Activated T-helper 2 cell treated with anti-CD3 and anti-CD28 coated beads, Interferon-gamma antibody, Interleukin-2, Interleukin-4, amounts not matched to agents 10 μg/mL and 5 μg/mL and 100 μg/mL, durations not matched to agents 14 hours and 24 hours and 36 hours (primary cell): ENCODE measurements at regions of chr11 and their contacts with region 1.

Region 1: DNA sequence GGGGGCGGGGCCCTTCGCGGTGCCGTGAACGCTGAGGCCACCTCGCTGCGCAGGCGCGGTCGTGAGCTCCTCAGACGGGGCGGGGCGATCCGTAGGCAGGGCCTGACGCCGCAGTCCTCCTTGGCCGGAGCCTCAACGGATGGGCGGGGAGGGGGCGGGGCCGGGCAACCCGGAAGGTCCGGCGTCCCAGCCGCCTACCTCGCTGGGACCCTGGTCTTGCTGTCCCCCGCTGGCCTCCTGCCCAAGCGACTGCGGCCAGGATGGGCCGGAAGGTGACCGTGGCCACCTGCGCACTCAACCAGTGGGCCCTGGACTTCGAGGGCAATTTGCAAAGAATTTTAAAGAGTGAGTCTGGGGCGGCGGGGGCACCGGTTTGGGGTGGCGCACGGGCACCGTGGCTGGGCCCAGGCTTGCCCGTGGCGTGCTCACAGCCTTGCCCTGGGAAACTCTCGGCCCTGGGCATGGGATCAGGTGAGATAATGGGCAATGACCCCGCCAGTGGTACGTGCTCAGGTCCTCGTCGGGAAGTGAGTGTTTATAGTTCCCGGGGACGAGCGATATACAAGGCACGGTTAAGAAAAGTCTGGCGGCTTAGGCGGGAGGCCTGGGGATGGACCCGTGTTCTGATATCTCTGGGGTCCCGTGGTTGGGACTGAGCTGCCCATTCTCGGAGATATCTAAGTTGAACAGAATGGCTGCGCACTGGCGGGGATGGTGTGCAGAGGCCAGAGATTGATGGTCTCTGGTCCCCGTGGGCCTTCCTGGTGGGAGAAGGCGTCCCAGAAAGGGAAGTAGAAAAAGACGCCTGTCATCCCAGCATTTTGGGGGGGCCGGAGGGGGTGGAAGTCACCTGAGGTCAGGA is at the start of gene NADSYN1:
- DNase-seq: peak; percentile 92
- H3K4me3 Mint-ChIP-seq: peak within 1 kb of the TSS; percentile 89
- H3K27ac Mint-ChIP-seq: peak within 1 kb of the TSS; percentile 88
- H3K4me1 Mint-ChIP-seq: peaks cover 40% of the 10 kb centered on the region
- H3K27me3 Mint-ChIP-seq: no peaks in the 10 kb centered on the region
- total RNA-seq, gene NADSYN1: 114 and 117 TPM in 2 replicates

Region 2: GRCh38 chr11:71383461-71383860 is 69.8 kb before region 1 on chr11:
- intact Hi-C with region 1: no loop called
- DNase-seq: no peak
- H3K4me3 Mint-ChIP-seq: no peak overlapping the region
- H3K27ac Mint-ChIP-seq: no peak overlapping the region
- H3K4me1 Mint-ChIP-seq: no peaks in the 10 kb centered on the region
- H3K27me3 Mint-ChIP-seq: no peaks in the 10 kb centered on the region

Region 3: GRCh38 chr11:71489311-71490048 is 36.2 kb after region 1 on chr11:
- intact Hi-C with region 1: loop called (anchors 2 kb)
- DNase-seq: peak; percentile 17
- H3K4me3 Mint-ChIP-seq: peak overlapping the region; percentile 26
- H3K27ac Mint-ChIP-seq: peak overlapping the region; percentile 90
- H3K4me1 Mint-ChIP-seq: peaks cover 20% of the 10 kb centered on the region
- H3K27me3 Mint-ChIP-seq: no peaks in the 10 kb centered on the region